HEK293 (cell line): ENCODE measurements at regions of chr10 and their contacts with region 1.

Region 1: GRCh38 chr10:95601116-95601719 is 40.0 kb upstream of the SORBS1 start:
- H3K4me3 ChIP-seq: no peak overlapping the region
- H3K27ac ChIP-seq: no peak overlapping the region
- H3K4me1 ChIP-seq: no peaks in the 10 kb centered on the region
- CTCF ChIP-seq: peak; percentile 87; the same call in 1 of the 2 replicates

Region 2: DNA sequence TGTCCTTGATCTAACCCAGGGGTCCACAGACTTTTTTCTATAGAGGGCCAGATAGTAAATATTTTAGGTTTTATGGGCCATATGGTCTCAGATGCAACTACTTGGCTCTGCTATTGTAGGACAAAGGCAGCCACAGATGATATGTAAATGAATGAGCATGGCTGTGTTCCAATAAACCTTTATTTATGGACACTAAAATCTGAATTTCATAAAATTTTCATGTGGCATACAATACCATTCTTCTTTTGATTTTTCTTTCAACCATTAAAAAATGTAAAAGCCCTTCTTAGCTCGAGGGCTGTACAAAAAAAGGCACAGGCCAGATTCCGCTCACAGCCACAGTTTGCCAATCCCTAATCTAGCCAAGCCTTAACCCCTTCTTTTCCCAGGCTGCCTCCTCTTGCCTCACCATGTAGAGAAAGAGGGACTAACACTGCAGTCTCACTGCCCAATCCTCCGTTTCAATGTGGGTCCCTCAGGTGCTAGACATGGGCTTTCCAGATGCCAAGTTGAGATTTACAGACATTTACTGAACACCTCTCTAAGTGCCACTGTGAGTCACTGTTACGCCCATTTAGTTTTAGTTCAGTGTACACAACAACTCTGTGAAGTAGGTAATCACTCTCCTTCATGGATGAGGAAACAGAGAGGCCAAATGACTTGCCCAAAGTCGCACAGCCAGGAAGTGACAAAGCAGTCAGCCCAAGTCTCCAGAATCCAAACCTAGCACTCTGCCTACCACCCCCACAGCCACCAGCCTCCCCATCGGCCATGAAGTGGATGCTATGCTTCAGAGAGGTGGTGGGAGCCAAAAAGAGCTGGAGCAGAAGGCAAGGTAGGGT is 177.8 kb before region 1 on chr10:
- CTCF ChIA-PET with region 1: interaction called, 166 read pairs
- POLR2A ChIA-PET with region 1: no interaction called
- H3K4me3 ChIP-seq: no peak overlapping the region
- H3K27ac ChIP-seq: no peak overlapping the region
- H3K4me1 ChIP-seq: no peaks in the 10 kb centered on the region
- CTCF ChIP-seq: no peak

Region 3: DNA sequence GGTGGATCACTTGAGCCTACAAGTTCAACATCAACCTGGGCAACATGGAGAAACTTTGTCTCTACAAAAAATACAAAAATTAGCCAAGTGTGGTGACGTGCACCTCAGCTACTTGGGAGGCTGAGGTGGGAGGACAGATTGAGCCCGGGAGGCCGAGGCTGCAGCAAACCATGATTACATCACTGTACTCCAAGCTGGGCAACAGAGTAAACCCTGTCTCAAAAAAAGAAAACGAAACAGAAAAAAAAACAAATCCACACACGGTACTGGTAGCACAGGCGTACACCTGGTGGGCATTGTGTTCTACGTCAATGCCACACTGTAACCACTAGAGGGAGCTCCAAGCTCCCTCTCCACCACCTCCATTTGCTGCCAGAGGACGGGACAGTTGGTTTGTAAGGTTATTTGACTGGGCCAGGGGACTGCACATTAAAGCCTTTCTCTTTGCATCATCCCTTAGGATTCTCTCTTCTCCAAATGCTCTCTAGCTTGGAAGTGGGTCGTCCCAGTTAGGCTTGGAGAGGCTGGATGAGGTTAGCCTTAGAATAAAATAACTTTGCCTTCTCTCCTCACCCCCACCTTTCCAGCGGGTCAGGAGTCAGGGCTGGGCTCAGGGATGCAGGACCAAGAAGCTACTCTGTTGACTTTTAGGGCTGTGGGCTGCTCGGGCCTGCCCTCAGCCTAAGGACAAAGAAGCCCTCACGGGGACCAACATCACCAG is 170.8 kb before region 1 on chr10:
- CTCF ChIA-PET with region 1: interaction called, 166 read pairs
- POLR2A ChIA-PET with region 1: interaction called, 3 read pairs
- H3K4me3 ChIP-seq: no peak overlapping the region
- H3K27ac ChIP-seq: no peak overlapping the region
- H3K4me1 ChIP-seq: no peaks in the 10 kb centered on the region
- CTCF ChIP-seq: peak; percentile 87

Region 4: DNA sequence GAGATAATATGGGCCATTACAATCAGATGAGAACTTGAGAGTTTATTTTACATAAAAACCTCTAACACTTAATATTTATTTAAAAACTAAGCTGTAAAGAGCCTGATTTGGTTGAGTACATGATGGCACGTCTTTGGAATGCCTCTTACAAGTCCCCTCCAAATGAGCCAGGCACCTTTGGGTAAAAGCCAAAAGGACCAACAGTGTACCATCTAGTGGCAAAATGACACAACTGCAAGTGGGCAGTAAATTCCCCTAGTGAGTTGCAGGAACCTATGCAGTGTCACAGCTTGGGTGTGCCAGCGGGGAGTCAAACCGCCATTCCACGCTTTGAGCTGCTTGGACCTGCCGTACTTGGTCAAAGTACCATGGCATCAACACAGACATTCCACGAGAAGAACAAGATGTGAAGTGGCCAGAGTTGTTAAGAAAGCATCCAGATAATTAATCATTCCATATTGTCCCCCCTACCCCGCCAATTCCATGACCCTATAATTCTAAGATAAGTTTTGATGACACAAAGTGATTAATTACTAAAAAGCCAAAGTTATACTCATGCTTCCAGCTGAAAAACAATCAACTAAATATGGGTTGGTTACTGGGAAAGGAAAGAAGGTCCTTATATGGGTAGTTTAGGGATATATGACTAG is 155.3 kb before region 1 on chr10:
- CTCF ChIA-PET with region 1: interaction called, 16 read pairs
- POLR2A ChIA-PET with region 1: no interaction called
- H3K4me3 ChIP-seq: no peak overlapping the region
- H3K27ac ChIP-seq: no peak overlapping the region
- H3K4me1 ChIP-seq: peaks cover 3% of the 10 kb centered on the region; the same call in 1 of the 2 replicates
- CTCF ChIP-seq: peak; percentile 70

Region 5: GRCh38 chr10:95588025-95588424 is 13.2 kb before region 1 on chr10:
- CTCF ChIA-PET with region 1: interaction called, 19 read pairs
- POLR2A ChIA-PET with region 1: no interaction called
- H3K4me3 ChIP-seq: no peak overlapping the region
- H3K27ac ChIP-seq: no peak overlapping the region
- H3K4me1 ChIP-seq: no peaks in the 10 kb centered on the region
- CTCF ChIP-seq: no peak

Region 6: GRCh38 chr10:95626500-95626899 is 25.3 kb after region 1 on chr10:
- CTCF ChIA-PET with region 1: interaction called, 10 read pairs
- POLR2A ChIA-PET with region 1: no interaction called
- H3K4me3 ChIP-seq: no peak overlapping the region
- H3K27ac ChIP-seq: no peak overlapping the region
- H3K4me1 ChIP-seq: no peaks in the 10 kb centered on the region
- CTCF ChIP-seq: no peak

Region 7: DNA sequence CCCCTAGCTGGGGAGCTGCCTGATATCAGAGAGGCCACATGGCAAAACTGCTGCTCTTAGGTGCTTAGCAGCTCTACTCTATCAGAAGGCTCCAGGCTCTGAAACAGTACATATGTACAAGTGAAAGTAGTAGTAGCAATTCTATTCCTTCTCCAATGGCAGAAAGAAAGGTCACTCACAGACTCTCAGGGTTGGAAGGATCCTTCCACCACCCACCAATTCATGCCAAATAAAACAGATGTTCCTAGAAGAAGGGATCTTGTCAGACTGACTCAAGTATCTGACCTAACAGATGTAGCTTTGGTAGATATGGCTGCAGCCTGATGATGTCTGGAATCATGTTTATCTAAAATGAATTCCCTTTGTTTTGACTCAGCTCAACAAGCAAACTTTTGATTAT is 63.3 kb after region 1 on chr10:
- CTCF ChIA-PET with region 1: no interaction called
- POLR2A ChIA-PET with region 1: no interaction called
- H3K4me3 ChIP-seq: no peak overlapping the region
- H3K27ac ChIP-seq: no peak overlapping the region
- H3K4me1 ChIP-seq: no peaks in the 10 kb centered on the region
- CTCF ChIP-seq: no peak

Region 8: DNA sequence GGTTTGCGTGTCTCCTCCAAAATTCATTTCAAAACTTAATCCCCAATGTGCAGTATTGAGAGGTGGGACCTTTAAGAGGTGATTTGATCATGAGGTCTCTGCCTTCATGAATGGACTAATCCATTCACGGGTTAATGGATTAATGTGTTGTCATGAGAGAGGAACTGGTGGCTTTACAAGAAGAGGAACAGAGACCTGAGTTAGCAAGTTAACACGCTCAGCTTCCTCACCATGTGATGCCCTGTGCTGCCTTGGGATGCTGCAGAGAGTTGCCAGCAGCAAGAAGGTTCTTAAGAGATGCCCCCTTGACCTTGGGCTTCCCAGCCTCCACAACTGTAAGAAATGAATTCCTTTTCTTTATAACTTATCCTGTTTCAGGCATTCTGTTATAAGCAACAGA is 96.2 kb after region 1 on chr10:
- CTCF ChIA-PET with region 1: no interaction called
- POLR2A ChIA-PET with region 1: no interaction called
- H3K4me3 ChIP-seq: no peak overlapping the region
- H3K27ac ChIP-seq: no peak overlapping the region
- H3K4me1 ChIP-seq: peaks cover under 1% of the 10 kb centered on the region; the same call in 1 of the 2 replicates
- CTCF ChIP-seq: no peak